Heart left ventricle (tissue), 16 donors: ENCODE measurements at regions of chr18 and their contacts with region 1.

Region 1: GRCh38 chr18:50878345-50879301 is at the start of gene ME2:
- DNase-seq: peak; percentile 93 to 97 (median 94)
- ATAC-seq: peak; percentile 99
- H3K4me3 ChIP-seq: peak within 1 kb of the TSS; percentile 51 to 98 (median 79)
- H3K27ac ChIP-seq: peak within 1 kb of the TSS; percentile 85 to 98 (median 94)
- H3K4me1 ChIP-seq: peaks cover 0 to 40% (median 12%) of the 10 kb centered on the region in 12 donors
- H3K27me3 ChIP-seq: no peaks in the 10 kb centered on the region
- CTCF ChIP-seq: no peak
- POLR2A ChIP-seq: peak; percentile 88 to 97
- total RNA-seq, gene ME2: 53.0 to 91.3 (median 84.0) TPM

Region 2: DNA sequence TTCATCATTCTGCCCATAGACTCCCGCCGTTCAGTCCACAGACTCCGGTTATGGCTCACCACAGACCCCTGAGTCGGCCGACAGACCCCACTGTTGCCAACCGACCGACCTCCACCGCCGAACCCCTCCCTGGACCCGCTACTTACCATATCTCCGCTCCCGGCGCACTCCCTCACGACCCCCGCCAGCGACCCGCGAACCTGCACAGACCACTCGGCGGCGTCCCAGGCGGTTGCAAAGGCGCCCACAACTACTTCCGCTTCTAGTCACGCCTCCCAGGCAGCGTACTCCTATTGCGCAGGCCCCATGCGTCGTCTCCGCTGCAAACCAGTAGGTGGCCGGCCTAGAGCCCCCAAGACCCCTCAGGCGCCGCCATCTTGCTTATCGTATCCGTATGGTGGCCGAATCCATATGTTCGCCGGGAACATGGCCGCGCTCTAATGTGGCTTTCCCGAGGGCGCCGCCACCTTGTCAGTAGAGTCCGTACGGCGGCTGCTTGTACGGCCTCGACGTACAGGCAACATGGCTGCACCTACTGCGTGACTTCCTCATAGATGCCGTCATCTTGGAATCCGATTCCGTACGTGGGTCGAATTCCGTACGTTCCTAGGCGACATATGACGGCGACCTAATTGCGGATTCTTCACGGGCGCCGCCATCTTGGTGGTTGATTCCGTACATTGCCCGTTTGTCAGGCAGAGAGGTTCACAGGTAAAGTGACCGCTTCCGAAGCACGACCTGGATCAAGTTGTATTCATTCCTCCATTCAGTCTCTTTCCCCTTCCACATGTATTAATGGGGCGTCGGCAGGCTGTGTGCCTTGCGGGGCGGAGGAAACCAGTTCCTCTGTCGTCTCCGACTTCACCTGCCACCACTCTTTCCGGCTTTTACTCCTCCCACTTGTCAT is 590.9 kb before region 1 on chr18 and contains the start of gene CXXC1:
- intact Hi-C with region 1: loop called in 1 of 10 experiments (anchors 5 kb)
- DNase-seq: peak; percentile 97 to 99 (median 98)
- ATAC-seq: peak; percentile 95 to 97 (median 96)
- H3K4me3 ChIP-seq: peak within 1 kb of the TSS; percentile 55 to 90 (median 77)
- H3K27ac ChIP-seq: peak within 1 kb of the TSS; percentile 45 to 94 (median 86)
- H3K4me1 ChIP-seq: peaks cover 0 to 20% (median 0%) of the 10 kb centered on the region in 12 donors
- H3K27me3 ChIP-seq: no peaks in the 10 kb centered on the region
- CTCF ChIP-seq: peak; percentile 36 to 63 (median 48)
- POLR2A ChIP-seq: peak in 1 of 2 donors; percentile 44
- total RNA-seq, gene CXXC1: 18.3 to 36.7 (median 33.2) TPM

Region 3: GRCh38 chr18:50819728-50820378 is 58.8 kb before region 1 on chr18 and contains the start of gene MRO:
- intact Hi-C with region 1: loop called in 2 of 10 experiments (anchors 1 to 2 kb)
- DNase-seq: peak; percentile 82 to 93 (median 89)
- ATAC-seq: peak; percentile 96 to 97 (median 96)
- H3K4me3 ChIP-seq: peak within 1 kb of the TSS in 11 of 12 donors; percentile 21 to 60 (median 43)
- H3K27ac ChIP-seq: peak within 1 kb of the TSS in 11 of 12 donors; percentile 2 to 72 (median 50)
- H3K4me1 ChIP-seq: peaks cover 0 to 28% (median 12%) of the 10 kb centered on the region in 12 donors
- H3K27me3 ChIP-seq: no peaks in the 10 kb centered on the region
- CTCF ChIP-seq: peak; percentile 84 to 96 (median 92)
- POLR2A ChIP-seq: no peak
- total RNA-seq, gene MRO: 0.42 to 6.9 (median 3.7) TPM

Region 4: GRCh38 chr18:50973367-50974126 is 94.9 kb after region 1 on chr18:
- intact Hi-C with region 1: loop called in 6 of 10 experiments (anchors 2 to 10 kb)
- DNase-seq: no peak
- ATAC-seq: peak in 3 of 4 donors; percentile 58 to 87 (median 76)
- H3K4me3 ChIP-seq: no peak overlapping the region
- H3K27ac ChIP-seq: no peak overlapping the region
- H3K4me1 ChIP-seq: peaks cover 0 to 28% (median 16%) of the 10 kb centered on the region in 12 donors
- H3K27me3 ChIP-seq: no peaks in the 10 kb centered on the region
- CTCF ChIP-seq: no peak
- POLR2A ChIP-seq: no peak

Region 5: DNA sequence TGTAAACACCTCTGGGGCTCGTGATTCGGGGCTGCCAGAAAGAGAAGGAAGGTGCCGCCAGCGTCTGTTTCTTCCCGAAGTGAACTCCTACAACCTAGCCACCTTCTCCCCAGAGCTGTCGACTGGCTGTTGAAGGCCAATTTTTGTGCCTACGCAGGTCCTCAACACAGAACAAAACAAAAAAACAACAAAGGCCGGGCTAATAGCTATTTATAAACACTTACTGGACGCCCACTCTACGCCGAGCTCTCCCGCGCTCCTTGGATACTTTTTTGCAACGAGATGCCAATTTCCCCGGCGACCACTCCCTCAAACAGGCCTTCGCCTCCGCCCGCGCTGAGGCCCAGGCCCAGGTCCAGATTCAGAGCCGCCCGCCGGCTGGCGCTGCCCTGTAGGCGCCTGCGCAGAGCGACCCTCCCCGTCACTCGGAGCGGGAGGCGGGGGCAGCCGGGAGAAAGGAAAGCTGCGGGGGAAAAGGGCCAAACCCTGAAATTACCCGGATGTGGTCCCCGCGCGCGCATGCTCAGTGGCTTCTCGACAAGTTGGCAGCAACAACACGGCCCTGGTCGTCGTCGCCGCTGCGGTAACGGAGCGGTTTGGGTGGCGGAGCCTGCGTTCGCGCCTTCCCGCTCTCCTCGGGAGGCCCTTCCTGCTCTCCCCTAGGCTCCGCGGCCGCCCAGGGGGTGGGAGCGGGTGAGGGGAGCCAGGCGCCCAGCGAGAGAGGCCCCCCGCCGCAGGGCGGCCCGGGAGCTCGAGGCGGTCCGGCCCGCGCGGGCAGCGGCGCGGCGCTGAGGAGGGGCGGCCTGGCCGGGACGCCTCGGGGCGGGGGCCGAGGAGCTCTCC is 151.3 kb after region 1 on chr18 and contains the start of gene SMAD4:
- intact Hi-C with region 1: loop called in 4 of 10 experiments (anchors 1 to 10 kb)
- DNase-seq: peak; percentile 96 to 99 (median 97)
- ATAC-seq: peak; percentile 95 to 98 (median 96)
- H3K4me3 ChIP-seq: peak within 1 kb of the TSS; percentile 54 to 97 (median 79)
- H3K27ac ChIP-seq: peak within 1 kb of the TSS; percentile 92 to 99 (median 98)
- H3K4me1 ChIP-seq: peaks cover 11 to 75% (median 46%) of the 10 kb centered on the region in 12 donors
- H3K27me3 ChIP-seq: no peaks in the 10 kb centered on the region
- CTCF ChIP-seq: peak in 1 of 12 donors; percentile 13
- POLR2A ChIP-seq: peak in 1 of 2 donors; percentile 86
- total RNA-seq, gene SMAD4: 78.6 to 103 (median 92.0) TPM

Region 6: GRCh38 chr18:51197661-51198424 is 319.2 kb after region 1 on chr18 and contains the start of gene MEX3C:
- intact Hi-C with region 1: loop called in 2 of 10 experiments (anchors 5 kb)
- DNase-seq: peak; percentile 99 to 100 (median 99)
- ATAC-seq: peak; percentile 95 to 97 (median 97)
- H3K4me3 ChIP-seq: peak within 1 kb of the TSS; percentile 64 to 99 (median 88)
- H3K27ac ChIP-seq: peak within 1 kb of the TSS; percentile 92 to 99 (median 96)
- H3K4me1 ChIP-seq: peaks cover 1 to 29% (median 26%) of the 10 kb centered on the region in 12 donors
- H3K27me3 ChIP-seq: no peaks in the 10 kb centered on the region
- CTCF ChIP-seq: peak in 11 of 12 donors; percentile 15 to 68 (median 37)
- POLR2A ChIP-seq: peak in 1 of 2 donors; percentile 43
- total RNA-seq, gene MEX3C: 15.1 to 28.2 (median 20.7) TPM